ENCODE measurements at regions of chr14 and their contacts with region 1.

Region 1: DNA sequence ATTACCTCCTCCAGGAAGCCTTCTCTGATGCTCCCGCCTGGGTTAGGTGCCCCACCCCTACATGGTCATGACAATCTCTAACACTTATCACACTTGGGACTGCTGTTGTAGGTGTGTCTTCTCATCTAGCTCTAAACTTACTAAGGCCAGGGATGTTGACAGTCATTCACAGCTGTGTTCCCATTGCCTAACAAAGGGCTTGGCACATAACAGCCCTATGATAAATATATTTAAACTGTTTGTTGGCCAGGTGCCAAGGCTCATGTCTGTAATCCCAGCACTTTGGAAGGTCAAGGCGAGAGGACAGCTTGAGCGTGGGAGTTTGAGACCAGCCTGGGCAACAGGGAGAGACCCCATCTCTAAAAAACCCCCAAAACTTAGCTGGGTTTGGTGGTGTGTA is 98.8 kb upstream of the RGS6 start:
- DNase-seq: no peak
- H3K4me3 ChIP-seq: no peak overlapping the region
- H3K4me3 Mint-ChIP-seq: no peak overlapping the region
- H3K27ac ChIP-seq: no peak overlapping the region
- H3K27ac Mint-ChIP-seq: no peak overlapping the region
- H3K4me1 ChIP-seq: no peaks in the 10 kb centered on the region
- H3K4me1 Mint-ChIP-seq: no peaks in the 10 kb centered on the region
- H3K27me3 ChIP-seq: no peaks in the 10 kb centered on the region
- H3K27me3 Mint-ChIP-seq: peaks cover 5 to 7% of the 10 kb centered on the region in 2 donors

Region 2: DNA sequence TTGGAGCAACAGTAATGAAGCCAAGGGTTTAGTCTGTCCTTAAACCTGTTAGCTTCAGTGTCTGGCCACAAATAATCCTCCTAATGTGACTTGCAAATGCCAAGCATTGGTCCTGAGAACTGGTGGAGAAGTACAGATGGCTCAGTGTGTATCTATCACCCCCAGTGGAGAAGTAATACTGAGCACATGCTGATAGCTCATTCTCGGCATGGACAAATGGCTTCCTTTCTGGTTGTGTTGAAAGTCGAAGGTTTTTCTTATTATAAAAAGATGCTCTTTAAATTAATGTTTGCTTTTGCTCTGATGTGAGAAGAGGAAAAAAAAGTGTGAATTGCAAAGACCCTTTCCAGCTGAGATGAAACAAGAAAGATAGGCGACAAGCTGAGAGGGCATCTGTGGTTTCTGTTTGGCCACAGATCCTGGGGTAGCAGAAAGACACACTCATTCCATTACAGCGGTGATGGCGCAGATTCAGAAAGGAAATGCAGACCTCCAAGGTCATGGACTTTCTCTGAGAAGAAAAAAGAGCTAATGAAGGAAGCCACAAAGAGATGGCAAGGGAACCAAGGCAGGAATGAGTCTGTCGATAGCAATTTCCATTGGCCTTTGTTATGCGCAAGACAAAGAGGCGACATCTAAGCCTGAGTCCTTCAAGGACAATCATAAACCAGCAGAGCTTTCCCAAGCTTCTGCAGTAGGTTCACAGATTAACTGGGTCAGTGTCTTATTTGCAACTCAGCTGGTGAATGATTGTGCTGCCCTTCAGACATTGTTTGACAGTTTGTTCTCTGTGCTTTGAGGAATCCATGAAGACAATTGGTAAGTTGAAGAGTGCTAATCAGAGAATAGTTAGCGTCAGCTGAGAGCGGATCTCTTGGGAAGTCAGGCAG is 56.8 kb before region 1 on chr14:
- CTCF ChIA-PET with region 1: no interaction called
- POLR2A ChIA-PET with region 1: no interaction called
- intact Hi-C with region 1: no loop called
- DNase-seq: no peak
- H3K4me3 ChIP-seq: no peak overlapping the region
- H3K4me3 Mint-ChIP-seq: no peak overlapping the region
- H3K27ac ChIP-seq: no peak overlapping the region
- H3K27ac Mint-ChIP-seq: peak overlapping the region in 1 of 7 donors; percentile 16
- H3K4me1 ChIP-seq: no peaks in the 10 kb centered on the region
- H3K4me1 Mint-ChIP-seq: peaks cover 0 to 4% (median 4%) of the 10 kb centered on the region in 4 donors
- H3K27me3 ChIP-seq: no peaks in the 10 kb centered on the region
- H3K27me3 Mint-ChIP-seq: peaks cover 26 to 41% of the 10 kb centered on the region in 2 donors

Region 3: GRCh38 chr14:71855399-71856036 is 22.0 kb after region 1 on chr14:
- CTCF ChIA-PET with region 1: interaction called, 10 read pairs
- POLR2A ChIA-PET with region 1: no interaction called
- intact Hi-C with region 1: no loop called
- DNase-seq: peak in 3 of 5 donors; percentile 8 to 21 (median 9)
- H3K4me3 ChIP-seq: no peak overlapping the region
- H3K4me3 Mint-ChIP-seq: no peak overlapping the region
- H3K27ac ChIP-seq: no peak overlapping the region
- H3K27ac Mint-ChIP-seq: no peak overlapping the region
- H3K4me1 ChIP-seq: no peaks in the 10 kb centered on the region
- H3K4me1 Mint-ChIP-seq: peaks cover 0 to 5% (median 2%) of the 10 kb centered on the region in 4 donors
- H3K27me3 ChIP-seq: peaks cover 5% of the 10 kb centered on the region
- H3K27me3 Mint-ChIP-seq: peaks cover 39 to 53% of the 10 kb centered on the region in 2 donors